ENCODE measurements at regions of chr11 and their contacts with region 1.

Region 1: GRCh38 chr11:2269601-2270321 is 627 bp downstream of the ASCL2 start:
- DNase-seq: peak; percentile 55
- ATAC-seq: peak; percentile 23
- H3K4me3 Mint-ChIP-seq: peak overlapping the region; percentile 70
- H3K27ac Mint-ChIP-seq: peak overlapping the region; percentile 74
- H3K4me1 Mint-ChIP-seq: peaks cover 41% of the 10 kb centered on the region
- H3K27me3 Mint-ChIP-seq: peaks cover 6% of the 10 kb centered on the region
- CTCF ChIP-seq: no peak

Region 2: GRCh38 chr11:2196970-2197770 is 72.6 kb before region 1 on chr11:
- CTCF ChIA-PET with region 1: interaction called, 4 read pairs
- POLR2A ChIA-PET with region 1: no interaction called
- intact Hi-C with region 1: loop called (anchors 1 kb)
- DNase-seq: peak; percentile 61
- ATAC-seq: peak; percentile 97
- H3K4me3 Mint-ChIP-seq: no peak overlapping the region
- H3K27ac Mint-ChIP-seq: peak overlapping the region; percentile 9
- H3K4me1 Mint-ChIP-seq: peaks cover 6% of the 10 kb centered on the region
- H3K27me3 Mint-ChIP-seq: peaks cover 10% of the 10 kb centered on the region
- CTCF ChIP-seq: peak; percentile 31

Region 3: GRCh38 chr11:2220173-2220771 is 49.5 kb before region 1 on chr11:
- CTCF ChIA-PET with region 1: no interaction called
- POLR2A ChIA-PET with region 1: no interaction called
- intact Hi-C with region 1: loop called (anchors 2 kb)
- DNase-seq: no peak
- ATAC-seq: peak; percentile 21
- H3K4me3 Mint-ChIP-seq: no peak overlapping the region
- H3K27ac Mint-ChIP-seq: peak overlapping the region; percentile 1
- H3K4me1 Mint-ChIP-seq: peaks cover 9% of the 10 kb centered on the region
- H3K27me3 Mint-ChIP-seq: peaks cover 13% of the 10 kb centered on the region
- CTCF ChIP-seq: no peak

Region 4: DNA sequence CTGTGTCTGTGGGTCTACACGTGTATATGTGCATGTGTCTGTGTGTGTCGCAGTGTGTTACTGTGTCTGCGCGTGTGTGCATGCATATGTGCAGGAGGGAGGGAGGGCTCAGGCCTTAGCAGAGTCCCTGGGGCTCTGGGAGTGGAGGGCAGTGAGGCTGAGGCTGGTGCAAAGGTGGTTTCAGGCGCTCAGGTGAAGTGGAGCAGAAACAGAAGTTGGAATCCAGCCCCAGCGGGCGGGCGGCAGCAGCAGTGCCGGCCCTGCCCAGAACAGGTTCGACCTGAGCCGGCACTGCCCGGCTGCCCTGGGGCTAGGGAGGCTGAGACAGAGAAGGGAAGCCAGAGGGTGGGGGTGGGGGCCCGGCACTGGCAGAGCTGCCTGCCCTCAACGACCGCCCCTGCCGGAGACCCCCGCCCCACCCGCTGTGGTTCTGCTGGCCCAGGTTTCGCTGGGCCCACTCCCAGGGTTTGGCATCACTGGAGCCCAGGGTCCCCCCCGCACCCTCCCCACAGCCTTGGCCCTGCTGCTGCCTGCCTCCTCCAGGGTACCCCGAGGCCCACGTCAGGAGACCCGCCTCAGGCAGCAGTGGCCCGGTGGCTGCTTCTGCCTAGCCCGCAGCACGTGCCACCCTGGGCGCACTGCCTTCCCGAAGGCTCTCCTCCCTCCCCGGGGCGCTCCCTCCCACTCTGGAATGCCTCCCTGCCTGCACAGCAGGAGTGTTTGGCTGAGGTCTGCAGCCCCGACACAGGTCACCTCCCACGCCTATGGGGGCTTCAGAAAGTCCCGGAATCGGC is 12.6 kb before region 1 on chr11:
- CTCF ChIA-PET with region 1: no interaction called
- POLR2A ChIA-PET with region 1: no interaction called
- intact Hi-C with region 1: no loop called
- DNase-seq: no peak
- ATAC-seq: no peak
- H3K4me3 Mint-ChIP-seq: no peak overlapping the region
- H3K27ac Mint-ChIP-seq: no peak overlapping the region
- H3K4me1 Mint-ChIP-seq: no peaks in the 10 kb centered on the region
- H3K27me3 Mint-ChIP-seq: no peaks in the 10 kb centered on the region
- CTCF ChIP-seq: no peak

Region 5: DNA sequence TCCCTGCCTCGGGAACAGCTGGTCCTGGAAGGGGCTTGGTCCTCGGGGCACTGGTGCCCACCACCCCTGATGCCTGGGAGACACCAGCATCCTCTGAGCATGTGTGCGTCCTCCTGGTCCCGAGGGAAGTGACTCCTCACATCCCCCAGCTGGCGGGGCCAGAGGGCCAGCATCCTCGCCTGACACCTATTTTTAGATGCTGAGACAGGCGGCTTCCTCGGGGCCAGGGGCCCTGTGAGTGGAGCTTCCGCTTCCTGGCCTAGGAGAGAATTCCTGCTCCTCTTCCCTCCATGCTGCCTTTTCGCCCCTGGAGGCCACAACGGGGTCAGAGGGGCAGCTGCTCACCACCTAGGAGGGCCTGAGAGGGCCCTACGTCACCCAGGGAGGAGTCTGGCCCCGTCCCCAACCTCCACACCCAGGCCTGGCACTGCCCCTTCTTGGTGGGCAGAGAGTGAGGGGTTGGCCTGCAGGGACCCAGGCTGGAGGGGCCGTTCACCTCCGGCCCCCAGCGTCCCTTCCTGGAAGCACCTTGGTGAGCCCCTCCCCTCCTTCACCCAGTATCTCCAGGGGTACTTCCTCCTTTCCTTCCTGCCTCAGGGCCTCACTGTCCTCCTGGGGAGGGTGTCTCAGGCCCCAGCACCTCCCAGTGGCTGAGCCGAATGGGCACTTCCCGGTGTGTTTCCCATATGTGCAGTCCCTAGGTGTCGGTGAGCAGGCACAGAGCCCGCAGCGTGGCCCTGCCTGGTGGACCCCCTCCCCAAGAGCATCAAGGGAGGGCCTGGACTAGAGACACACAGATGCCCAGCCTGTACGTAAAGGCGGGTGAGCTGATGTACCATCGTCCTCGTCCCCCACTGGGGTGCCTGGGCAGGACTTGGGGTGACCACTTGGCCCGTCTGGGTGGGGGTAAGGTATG is 113.4 kb after region 1 on chr11:
- CTCF ChIA-PET with region 1: no interaction called
- POLR2A ChIA-PET with region 1: interaction called, 3 read pairs
- intact Hi-C with region 1: loop called (anchors 5 kb)
- DNase-seq: no peak
- ATAC-seq: no peak
- H3K4me3 Mint-ChIP-seq: peak overlapping the region; percentile 58
- H3K27ac Mint-ChIP-seq: peak overlapping the region; percentile 84
- H3K4me1 Mint-ChIP-seq: peaks cover 93% of the 10 kb centered on the region
- H3K27me3 Mint-ChIP-seq: no peaks in the 10 kb centered on the region
- CTCF ChIP-seq: no peak

Measured in activated B cell treated with CpG ODN at 0.5 μM for 24 hours (primary cell).